ENCODE measurements at regions of chr11 and their contacts with region 1.

Region 1: DNA sequence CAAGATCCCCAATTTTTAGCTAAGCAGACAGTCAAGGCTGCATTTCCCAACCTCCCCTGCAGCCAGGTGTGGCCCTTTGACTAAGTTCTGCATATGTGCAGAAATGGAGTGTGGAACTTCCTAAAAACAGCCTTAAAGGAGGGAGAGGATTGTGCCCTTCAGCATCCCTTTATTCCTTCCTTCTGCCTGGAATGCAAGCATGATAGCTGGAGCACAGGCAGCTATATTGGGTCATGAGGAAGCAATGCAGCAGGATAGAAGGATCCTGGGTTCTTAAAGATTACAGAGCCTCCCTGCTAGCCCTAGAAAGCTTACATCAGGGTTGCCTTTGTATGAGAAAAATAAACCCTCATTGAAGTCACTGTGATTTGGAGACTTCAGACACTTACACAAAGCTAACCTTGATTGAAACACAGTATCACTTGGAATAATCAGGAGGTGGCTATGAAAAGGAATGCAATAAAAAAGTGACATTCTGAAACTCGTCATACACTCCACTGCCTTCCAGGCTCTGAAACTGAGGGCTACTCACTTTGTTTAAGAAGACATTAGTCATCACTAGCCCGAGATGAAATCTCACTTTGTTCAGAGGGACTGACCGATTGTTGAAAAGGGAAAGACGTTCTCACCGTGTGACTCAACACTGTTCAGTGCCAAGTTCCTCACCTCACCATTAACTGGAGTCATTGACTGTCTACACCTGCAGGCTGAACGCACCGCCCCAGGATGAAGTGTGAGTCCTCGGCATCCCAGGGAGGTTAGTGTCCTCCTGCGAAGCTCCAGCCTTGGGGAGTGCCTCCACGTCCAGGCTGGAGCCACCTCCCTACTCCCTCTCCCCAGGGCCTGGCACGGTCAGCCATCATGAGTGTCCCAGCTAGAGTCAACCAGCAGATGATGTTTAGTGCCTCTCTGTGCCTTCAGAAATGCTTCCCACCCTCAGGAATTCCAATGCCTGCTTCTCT is 30.2 kb downstream of the FADD start:
- DNase-seq: peak; percentile 95
- H3K4me3 ChIP-seq: no peak overlapping the region
- H3K27ac ChIP-seq: no peak overlapping the region
- H3K4me1 ChIP-seq: peaks cover 3% of the 10 kb centered on the region
- H3K27me3 ChIP-seq: no peaks in the 10 kb centered on the region
- CTCF ChIP-seq: no peak

Region 2: GRCh38 chr11:70303070-70303469 is 69.8 kb after region 1 on chr11:
- dilution Hi-C with region 1: loop called (anchors 5 kb)
- DNase-seq: no peak
- H3K4me3 ChIP-seq: no peak overlapping the region
- H3K27ac ChIP-seq: no peak overlapping the region
- H3K4me1 ChIP-seq: peaks cover 2% of the 10 kb centered on the region
- H3K27me3 ChIP-seq: no peaks in the 10 kb centered on the region
- CTCF ChIP-seq: no peak

Measured in keratinocyte (primary cell).